Activated naive CD4-positive, alpha-beta T cell treated with anti-CD3 and anti-CD28 coated beads for 36 hours (primary cell): ENCODE measurements at regions of chr4 and their contacts with region 1.

Region 1: GRCh38 chr4:147617173-147617840 is at the start of gene TMEM184C:
- DNase-seq: peak; percentile 100
- H3K4me3 Mint-ChIP-seq: peak within 1 kb of the TSS; percentile 89
- H3K27ac Mint-ChIP-seq: peak within 1 kb of the TSS; percentile 93
- H3K4me1 Mint-ChIP-seq: peaks cover 23% of the 10 kb centered on the region
- H3K27me3 Mint-ChIP-seq: no peaks in the 10 kb centered on the region
- total RNA-seq, gene TMEM184C: 11.5 to 12.5 TPM

Region 2: DNA sequence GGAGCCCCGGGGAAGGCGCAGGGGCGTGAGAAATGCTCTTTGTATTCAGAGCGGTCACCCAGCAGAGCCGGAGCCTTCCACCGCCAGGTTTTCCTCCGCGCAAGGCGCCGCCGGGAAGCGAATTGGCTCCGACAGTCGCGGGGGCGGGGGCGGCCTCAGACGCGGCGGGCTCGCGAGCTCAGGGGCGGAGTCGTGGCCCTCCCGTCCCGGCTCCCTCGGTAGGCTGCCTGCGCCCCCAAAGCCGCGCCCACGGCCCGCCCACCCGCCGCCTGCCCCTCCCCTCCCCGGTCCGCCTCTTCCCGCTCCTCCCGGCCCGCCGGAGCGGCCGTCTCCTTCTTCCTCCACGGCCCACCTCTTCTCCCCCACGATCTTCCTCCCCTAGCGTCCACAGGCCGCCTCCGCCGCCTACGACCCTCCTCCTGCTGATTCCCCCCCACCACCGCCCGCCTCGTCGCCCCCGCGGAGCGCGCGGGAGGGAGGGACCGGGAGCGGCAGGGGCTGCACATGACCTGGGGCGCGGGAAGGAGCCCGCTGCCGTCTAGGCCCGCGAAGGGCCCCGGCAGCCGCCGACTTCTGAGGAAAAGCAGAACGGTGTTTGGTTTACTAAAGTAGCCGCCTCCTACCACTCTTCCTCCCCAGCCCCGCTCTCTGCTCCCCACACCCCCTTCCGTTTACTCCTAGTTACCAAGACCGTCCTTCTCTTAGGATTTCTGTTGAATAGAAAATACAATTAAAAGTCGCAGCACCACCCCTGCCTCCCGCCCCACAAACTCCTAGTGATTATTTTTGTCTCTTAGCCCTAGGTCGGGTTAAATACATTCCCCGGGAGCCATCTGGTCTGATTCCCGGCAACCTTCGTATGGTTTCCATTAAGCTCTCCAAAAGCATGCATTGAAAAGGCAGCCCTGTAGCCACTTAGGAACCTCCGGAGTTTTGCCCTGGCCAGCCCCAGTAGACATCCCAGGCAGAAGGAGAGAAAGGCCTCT is 1884.1 kb before region 1 on chr4:
- CTCF ChIA-PET with region 1: no interaction called
- intact Hi-C with region 1: loop called (anchors 5 kb)
- DNase-seq: peak; percentile 91
- H3K4me3 Mint-ChIP-seq: peak overlapping the region; percentile 75
- H3K27ac Mint-ChIP-seq: peak overlapping the region; percentile 36
- H3K4me1 Mint-ChIP-seq: peaks cover 7% of the 10 kb centered on the region
- H3K27me3 Mint-ChIP-seq: peaks cover 10% of the 10 kb centered on the region

Region 3: DNA sequence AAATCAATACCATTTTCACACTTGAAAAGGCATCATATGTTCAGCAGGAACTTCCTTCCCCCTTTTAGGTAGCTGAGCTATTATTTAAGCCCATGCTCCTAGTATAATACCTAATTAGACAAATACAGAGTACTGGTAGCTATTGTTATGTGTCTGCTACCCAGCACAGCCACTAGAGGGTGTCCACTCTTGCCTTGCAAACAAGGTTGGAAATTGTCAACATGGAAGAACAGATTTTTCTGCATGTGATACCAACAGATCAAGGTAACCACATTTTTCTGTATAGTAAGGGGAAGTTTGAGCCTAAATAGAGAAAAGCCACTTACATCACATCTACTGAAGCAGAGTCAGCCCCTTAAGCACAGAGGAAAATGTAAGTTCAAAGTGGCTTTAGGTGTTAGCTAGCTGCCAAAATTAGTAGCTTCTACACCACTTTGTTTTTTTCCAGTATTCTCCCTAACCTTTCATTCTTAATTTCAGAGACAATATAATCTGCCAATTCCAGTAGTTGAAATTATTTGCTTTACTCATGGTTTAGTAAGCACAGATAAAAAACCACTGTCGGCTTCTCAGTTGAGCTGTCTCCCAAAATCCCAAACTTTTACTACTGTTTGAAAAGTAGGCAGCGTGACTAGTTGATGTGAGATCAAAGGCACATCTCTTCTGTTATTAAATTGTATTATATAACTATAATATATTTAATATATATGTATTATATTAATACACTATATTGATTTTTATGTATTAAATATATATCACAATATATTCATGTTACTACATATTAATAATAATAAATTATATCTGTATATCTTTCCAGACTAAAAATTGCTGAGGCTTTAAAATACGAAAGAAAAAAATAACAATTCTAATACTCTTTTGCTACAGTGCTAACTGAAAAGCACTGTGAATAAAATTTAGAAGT is 98.2 kb before region 1 on chr4:
- CTCF ChIA-PET with region 1: interaction called, 3 read pairs
- intact Hi-C with region 1: loop called (anchors 1 kb)
- DNase-seq: peak; percentile 72
- H3K4me3 Mint-ChIP-seq: no peak overlapping the region
- H3K27ac Mint-ChIP-seq: no peak overlapping the region
- H3K4me1 Mint-ChIP-seq: no peaks in the 10 kb centered on the region
- H3K27me3 Mint-ChIP-seq: no peaks in the 10 kb centered on the region

Region 4: DNA sequence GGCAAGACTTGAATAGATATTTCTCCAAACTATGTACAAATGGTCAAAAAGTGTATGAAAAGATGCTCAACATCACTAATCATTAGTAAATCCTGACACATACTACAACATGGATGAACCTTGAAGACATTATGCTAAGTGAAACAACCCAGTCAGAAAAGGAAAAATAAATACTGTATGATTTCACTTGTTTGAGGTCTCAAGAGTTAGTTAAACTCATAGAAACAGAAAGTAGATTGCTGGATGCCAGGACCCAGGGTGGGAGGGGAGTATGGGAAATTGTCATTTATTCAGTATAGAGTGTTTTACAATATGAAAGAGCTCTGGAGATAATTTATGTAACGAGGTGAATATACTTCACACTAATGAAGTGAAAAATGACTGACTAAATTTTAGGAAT is 34.3 kb after region 1 on chr4:
- CTCF ChIA-PET with region 1: no interaction called
- intact Hi-C with region 1: loop called (anchors 1 kb)
- DNase-seq: peak; percentile 14
- H3K4me3 Mint-ChIP-seq: no peak overlapping the region
- H3K27ac Mint-ChIP-seq: no peak overlapping the region
- H3K4me1 Mint-ChIP-seq: peaks cover 32% of the 10 kb centered on the region
- H3K27me3 Mint-ChIP-seq: no peaks in the 10 kb centered on the region

Region 5: GRCh38 chr4:147731580-147732517 is 114.5 kb after region 1 on chr4 and contains the start of gene ARHGAP10:
- CTCF ChIA-PET with region 1: interaction called, 4 read pairs
- intact Hi-C with region 1: loop called (anchors 1 kb)
- DNase-seq: peak; percentile 72
- H3K4me3 Mint-ChIP-seq: peak within 1 kb of the TSS; percentile 85
- H3K27ac Mint-ChIP-seq: peak within 1 kb of the TSS; percentile 59
- H3K4me1 Mint-ChIP-seq: peaks cover 34% of the 10 kb centered on the region
- H3K27me3 Mint-ChIP-seq: peaks cover 8% of the 10 kb centered on the region
- total RNA-seq, gene ARHGAP10: 3.6 to 3.8 TPM